ENCODE measurements at regions of chr3 and their contacts with region 1.

Region 1: GRCh38 chr3:141523615-141524375 is 37.0 kb downstream of the RASA2 start:
- DNase-seq: peak in 1 of 2 experiments; percentile 29
- H3K4me3 ChIP-seq: no peak overlapping the region
- H3K4me3 Mint-ChIP-seq: no peak overlapping the region
- H3K27ac Mint-ChIP-seq: no peak overlapping the region
- H3K4me1 ChIP-seq: peaks cover 44% of the 10 kb centered on the region
- H3K4me1 Mint-ChIP-seq: peaks cover 19% of the 10 kb centered on the region
- H3K27me3 ChIP-seq: no peaks in the 10 kb centered on the region
- H3K27me3 Mint-ChIP-seq: no peaks in the 10 kb centered on the region
- CTCF ChIP-seq: no peak

Region 2: DNA sequence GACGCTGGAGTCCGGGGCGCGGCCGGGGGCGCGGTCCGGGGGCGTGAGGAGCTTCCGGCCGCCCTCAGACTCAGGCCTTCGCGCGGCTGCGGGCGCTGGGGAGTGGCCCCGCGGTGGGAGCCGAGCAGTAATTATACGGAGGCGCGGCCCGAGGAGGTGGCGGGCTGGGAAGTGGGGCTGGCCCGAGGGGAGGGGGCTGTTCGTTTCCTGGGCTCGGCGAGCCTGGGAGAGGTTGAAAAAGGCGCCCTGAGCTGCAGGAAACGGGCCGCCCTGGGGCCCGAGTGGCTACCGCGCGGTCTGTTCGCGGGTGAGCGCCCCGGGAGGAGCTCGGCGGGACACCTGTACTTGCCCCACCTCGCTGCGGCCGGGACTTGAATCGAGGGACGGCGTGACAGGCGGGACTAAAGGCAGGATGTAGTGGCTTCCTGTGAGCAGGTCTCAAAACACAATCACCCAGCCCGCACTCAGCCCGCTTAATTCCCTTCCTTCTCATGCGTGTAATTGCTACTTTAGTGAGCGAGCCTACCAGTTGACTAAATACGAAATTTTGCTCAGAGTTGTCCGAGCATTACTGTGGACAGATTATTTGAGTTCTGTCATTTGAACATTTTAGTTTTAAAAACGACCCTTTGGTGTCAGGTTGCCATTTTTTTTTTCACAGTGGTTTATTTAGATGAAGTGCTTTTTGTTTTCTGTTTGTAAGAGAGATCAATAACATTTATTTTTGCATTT is 36.1 kb before region 1 on chr3:
- CTCF ChIA-PET with region 1: no interaction called
- POLR2A ChIA-PET with region 1: interaction called, 6 read pairs
- intact Hi-C with region 1: loop called (anchors 5 kb)
- DNase-seq: peak; percentile 84 to 86
- H3K4me3 ChIP-seq: peak overlapping the region; percentile 82
- H3K4me3 Mint-ChIP-seq: peak overlapping the region; percentile 90
- H3K27ac Mint-ChIP-seq: peak overlapping the region; percentile 74
- H3K4me1 ChIP-seq: peaks cover 34% of the 10 kb centered on the region
- H3K4me1 Mint-ChIP-seq: peaks cover 59% of the 10 kb centered on the region
- H3K27me3 ChIP-seq: no peaks in the 10 kb centered on the region
- H3K27me3 Mint-ChIP-seq: no peaks in the 10 kb centered on the region
- CTCF ChIP-seq: peak in 1 of 2 experiments; percentile 3

Region 3: DNA sequence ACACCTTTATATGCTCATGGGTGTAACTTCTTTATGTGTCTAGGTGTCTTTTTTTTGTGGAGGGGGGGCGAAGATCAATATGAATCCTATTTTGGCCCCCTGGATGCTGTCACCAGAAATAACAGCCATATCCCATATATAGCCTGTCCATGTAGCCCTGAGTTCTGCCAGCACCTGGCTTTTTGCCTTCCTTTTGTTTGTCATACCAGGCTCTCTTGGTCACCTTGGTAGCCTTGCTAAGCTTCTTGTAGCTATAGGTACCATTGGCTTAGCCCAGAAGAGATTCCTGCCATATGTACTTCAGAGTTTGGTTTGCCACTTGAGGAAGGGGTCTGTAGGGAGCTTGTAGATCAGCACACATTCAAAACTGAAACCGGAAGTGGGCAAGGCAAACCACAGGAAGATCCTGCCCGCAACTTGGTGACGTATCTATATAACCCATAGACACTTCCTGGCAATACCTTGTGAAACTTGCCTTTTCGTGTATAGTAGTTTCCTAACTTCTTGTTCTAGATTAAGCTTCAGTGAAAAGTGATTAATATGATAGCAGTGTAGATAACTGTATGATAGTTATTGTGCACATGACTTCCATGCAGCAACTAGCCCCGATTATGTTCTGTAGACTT is 25.1 kb before region 1 on chr3:
- CTCF ChIA-PET with region 1: no interaction called
- POLR2A ChIA-PET with region 1: no interaction called
- intact Hi-C with region 1: no loop called
- DNase-seq: no peak
- H3K4me3 ChIP-seq: no peak overlapping the region
- H3K4me3 Mint-ChIP-seq: no peak overlapping the region
- H3K27ac Mint-ChIP-seq: no peak overlapping the region
- H3K4me1 ChIP-seq: peaks cover 3% of the 10 kb centered on the region; the same call in 1 of the 2 replicates
- H3K4me1 Mint-ChIP-seq: no peaks in the 10 kb centered on the region
- H3K27me3 ChIP-seq: no peaks in the 10 kb centered on the region
- H3K27me3 Mint-ChIP-seq: no peaks in the 10 kb centered on the region
- CTCF ChIP-seq: no peak

Region 4: GRCh38 chr3:141594357-141594756 is 70.6 kb after region 1 on chr3:
- CTCF ChIA-PET with region 1: no interaction called
- POLR2A ChIA-PET with region 1: no interaction called
- intact Hi-C with region 1: no loop called
- DNase-seq: no peak
- H3K4me3 ChIP-seq: no peak overlapping the region
- H3K4me3 Mint-ChIP-seq: no peak overlapping the region
- H3K27ac Mint-ChIP-seq: no peak overlapping the region
- H3K4me1 ChIP-seq: no peaks in the 10 kb centered on the region
- H3K4me1 Mint-ChIP-seq: no peaks in the 10 kb centered on the region
- H3K27me3 ChIP-seq: no peaks in the 10 kb centered on the region
- H3K27me3 Mint-ChIP-seq: no peaks in the 10 kb centered on the region
- CTCF ChIP-seq: no peak